ENCODE measurements at regions of chr5 and their contacts with region 1.

Region 1: GRCh38 chr5:23208959-23209431 is 298.4 kb upstream of the PRDM9 start:
- DNase-seq: no peak
- H3K4me3 Mint-ChIP-seq: no peak overlapping the region
- H3K27ac Mint-ChIP-seq: no peak overlapping the region
- H3K4me1 Mint-ChIP-seq: no peaks in the 10 kb centered on the region
- H3K27me3 Mint-ChIP-seq: no peaks in the 10 kb centered on the region

Region 2: DNA sequence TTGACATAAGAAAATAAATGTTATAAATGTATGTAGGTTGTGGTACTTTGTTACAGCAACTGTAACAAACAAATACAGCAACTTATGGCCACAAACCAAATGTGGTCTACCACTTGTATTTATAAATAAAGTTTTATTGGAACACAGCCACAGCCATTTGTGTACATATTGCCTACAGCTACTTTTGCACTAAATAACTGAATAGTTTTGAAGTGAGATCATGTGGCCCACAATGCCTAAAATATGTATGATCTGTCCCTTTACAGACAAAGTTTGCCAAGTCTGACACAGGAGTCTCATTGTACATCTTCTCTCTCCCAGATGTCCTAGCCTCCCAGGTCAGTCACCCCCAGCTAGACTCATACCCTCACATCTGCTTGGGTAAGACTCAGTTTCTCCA is 14.9 kb after region 1 on chr5:
- CTCF ChIA-PET with region 1: interaction called, 10 read pairs
- DNase-seq: no peak
- H3K4me3 Mint-ChIP-seq: no peak overlapping the region
- H3K27ac Mint-ChIP-seq: no peak overlapping the region
- H3K4me1 Mint-ChIP-seq: no peaks in the 10 kb centered on the region
- H3K27me3 Mint-ChIP-seq: no peaks in the 10 kb centered on the region